ENCODE measurements at regions of chr1 and their contacts with region 1.

Region 1: DNA sequence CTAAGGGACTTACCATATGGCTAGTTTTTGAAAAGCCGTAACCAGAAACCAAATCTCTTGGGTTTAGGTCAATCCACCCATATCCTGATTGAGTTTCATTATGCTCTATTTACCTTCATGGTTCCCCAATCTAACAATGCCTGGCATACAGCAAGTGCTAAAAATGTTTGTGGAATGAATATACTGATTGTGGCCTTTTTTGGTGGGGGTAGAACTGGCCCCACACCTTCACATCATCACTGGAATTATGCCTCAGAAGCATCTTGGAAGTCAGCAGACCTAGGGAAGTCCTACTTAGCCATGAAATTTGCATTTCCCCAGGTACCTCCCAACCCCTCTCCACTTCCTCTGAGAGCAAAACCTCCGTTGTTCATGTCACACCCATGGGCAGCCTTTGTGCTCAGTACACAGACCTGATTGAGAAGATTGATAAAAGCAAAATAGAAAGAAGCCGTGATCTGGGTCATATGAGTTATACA is 17.8 kb upstream of the SLAMF1 start:
- DNase-seq: peak; percentile 86
- H3K4me3 Mint-ChIP-seq: peak overlapping the region; percentile 74
- H3K27ac Mint-ChIP-seq: peak overlapping the region; percentile 93
- H3K4me1 Mint-ChIP-seq: peaks cover 63% of the 10 kb centered on the region
- H3K27me3 Mint-ChIP-seq: no peaks in the 10 kb centered on the region

Region 2: GRCh38 chr1:160637821-160638539 is 26.6 kb before region 1 on chr1:
- intact Hi-C with region 1: loop called (anchors 2 kb)
- DNase-seq: peak; percentile 89
- H3K4me3 Mint-ChIP-seq: peak overlapping the region; percentile 79
- H3K27ac Mint-ChIP-seq: peak overlapping the region; percentile 96
- H3K4me1 Mint-ChIP-seq: peaks cover 86% of the 10 kb centered on the region
- H3K27me3 Mint-ChIP-seq: no peaks in the 10 kb centered on the region

Region 3: DNA sequence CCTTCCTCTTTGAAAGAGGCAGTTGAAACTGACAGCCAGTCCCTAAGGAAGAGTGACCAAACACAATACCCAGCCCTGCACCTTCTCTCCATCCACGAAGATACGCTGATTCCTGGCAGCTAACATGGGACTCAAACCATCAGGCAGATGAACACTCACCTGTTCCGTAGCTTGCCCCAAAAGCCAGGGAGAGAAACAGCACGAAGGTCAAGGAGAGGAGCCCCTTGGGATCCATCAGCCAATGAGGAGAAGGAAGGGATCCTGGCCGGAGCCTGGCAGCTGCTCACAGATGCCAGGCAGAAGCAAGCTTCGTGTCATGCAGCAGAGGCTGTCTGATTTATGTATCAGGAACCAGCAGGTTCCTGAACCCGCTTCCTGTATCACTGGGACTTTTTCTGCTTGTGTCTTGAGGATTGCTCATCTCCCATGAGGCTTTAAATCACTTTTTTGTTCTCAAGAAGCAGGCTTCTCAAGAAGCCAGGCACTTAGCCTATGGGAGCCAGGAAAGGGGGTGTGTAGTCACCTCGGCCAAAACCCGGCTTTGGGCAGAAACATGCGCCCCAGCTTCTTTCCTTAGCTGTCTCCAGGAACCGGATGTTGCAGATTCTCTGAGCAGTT is 17.8 kb before region 1 on chr1 and contains the start of gene SLAMF1:
- intact Hi-C with region 1: loop called (anchors 1 kb)
- DNase-seq: peak; percentile 81
- H3K4me3 Mint-ChIP-seq: peak within 1 kb of the TSS; percentile 98
- H3K27ac Mint-ChIP-seq: peak within 1 kb of the TSS; percentile 98
- H3K4me1 Mint-ChIP-seq: peaks cover 49% of the 10 kb centered on the region
- H3K27me3 Mint-ChIP-seq: no peaks in the 10 kb centered on the region
- total RNA-seq, gene SLAMF1: 113 and 114 TPM in 2 replicates